Transverse colon (tissue), 4 donors: ENCODE measurements at regions of chr19 and their contacts with region 1.

Region 1: GRCh38 chr19:13012690-13013608 is 17.7 kb downstream of the NFIX start:
- DNase-seq: peak; percentile 74
- H3K4me3 ChIP-seq: peak overlapping the region in 3 of 4 donors; percentile 4 to 44 (median 14)
- H3K27ac ChIP-seq: peak overlapping the region; percentile 87 to 91 (median 90)
- H3K4me1 ChIP-seq: peaks cover 40 to 93% (median 81%) of the 10 kb centered on the region in 4 donors
- H3K27me3 ChIP-seq: peaks cover 18% of the 10 kb centered on the region
- CTCF ChIP-seq: no peak
- EP300 ChIP-seq: no peak
- POLR2A ChIP-seq: no peak

Region 2: GRCh38 chr19:13060964-13061927 is 48.3 kb after region 1 on chr19:
- in situ Hi-C with region 1: no loop called
- intact Hi-C with region 1: loop called (anchors 10 kb)
- DNase-seq: peak; percentile 91
- H3K4me3 ChIP-seq: peak overlapping the region; percentile 18 to 57 (median 35)
- H3K27ac ChIP-seq: peak overlapping the region; percentile 76 to 94 (median 84)
- H3K4me1 ChIP-seq: peaks cover 54 to 93% (median 62%) of the 10 kb centered on the region in 4 donors
- H3K27me3 ChIP-seq: no peaks in the 10 kb centered on the region
- CTCF ChIP-seq: peak; percentile 93 to 95 (median 95)
- EP300 ChIP-seq: no peak
- POLR2A ChIP-seq: no peak

Region 3: GRCh38 chr19:13079542-13079986 is 66.6 kb after region 1 on chr19:
- in situ Hi-C with region 1: no loop called
- intact Hi-C with region 1: no loop called
- DNase-seq: peak; percentile 80
- H3K4me3 ChIP-seq: no peak overlapping the region
- H3K27ac ChIP-seq: peak overlapping the region; percentile 83 to 91 (median 88)
- H3K4me1 ChIP-seq: peaks cover 41 to 47% (median 43%) of the 10 kb centered on the region in 4 donors
- H3K27me3 ChIP-seq: no peaks in the 10 kb centered on the region
- CTCF ChIP-seq: no peak
- EP300 ChIP-seq: no peak
- POLR2A ChIP-seq: no peak